Mammary epithelial cell (primary cell): ENCODE measurements at regions of chr6 and their contacts with region 1.

Region 1: DNA sequence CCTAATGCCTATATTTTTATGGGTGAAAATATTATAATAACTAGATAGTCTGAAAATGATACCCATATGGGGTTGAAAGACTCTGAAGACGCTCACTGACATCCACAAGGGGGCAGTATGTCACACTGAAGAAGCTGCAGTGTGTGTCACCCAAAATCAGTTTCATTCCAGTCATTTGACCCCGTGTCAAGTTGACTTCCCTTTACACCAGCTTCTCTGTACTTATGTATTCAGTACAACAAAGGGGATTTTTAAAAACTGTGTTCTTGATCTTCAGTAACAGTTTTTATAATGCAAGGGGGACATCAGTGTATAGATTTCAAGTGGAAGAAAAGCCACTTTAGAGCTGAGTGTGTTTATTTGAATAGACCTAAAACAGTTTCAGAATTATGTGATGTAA is 19.3 kb downstream of the FAXC start:
- DNase-seq: peak; percentile 63
- H3K4me3 ChIP-seq: no peak overlapping the region
- H3K27ac ChIP-seq: no peak overlapping the region
- H3K4me1 ChIP-seq: no peaks in the 10 kb centered on the region
- H3K27me3 ChIP-seq: no peaks in the 10 kb centered on the region
- CTCF ChIP-seq: peak; percentile 80 to 83

Region 2: DNA sequence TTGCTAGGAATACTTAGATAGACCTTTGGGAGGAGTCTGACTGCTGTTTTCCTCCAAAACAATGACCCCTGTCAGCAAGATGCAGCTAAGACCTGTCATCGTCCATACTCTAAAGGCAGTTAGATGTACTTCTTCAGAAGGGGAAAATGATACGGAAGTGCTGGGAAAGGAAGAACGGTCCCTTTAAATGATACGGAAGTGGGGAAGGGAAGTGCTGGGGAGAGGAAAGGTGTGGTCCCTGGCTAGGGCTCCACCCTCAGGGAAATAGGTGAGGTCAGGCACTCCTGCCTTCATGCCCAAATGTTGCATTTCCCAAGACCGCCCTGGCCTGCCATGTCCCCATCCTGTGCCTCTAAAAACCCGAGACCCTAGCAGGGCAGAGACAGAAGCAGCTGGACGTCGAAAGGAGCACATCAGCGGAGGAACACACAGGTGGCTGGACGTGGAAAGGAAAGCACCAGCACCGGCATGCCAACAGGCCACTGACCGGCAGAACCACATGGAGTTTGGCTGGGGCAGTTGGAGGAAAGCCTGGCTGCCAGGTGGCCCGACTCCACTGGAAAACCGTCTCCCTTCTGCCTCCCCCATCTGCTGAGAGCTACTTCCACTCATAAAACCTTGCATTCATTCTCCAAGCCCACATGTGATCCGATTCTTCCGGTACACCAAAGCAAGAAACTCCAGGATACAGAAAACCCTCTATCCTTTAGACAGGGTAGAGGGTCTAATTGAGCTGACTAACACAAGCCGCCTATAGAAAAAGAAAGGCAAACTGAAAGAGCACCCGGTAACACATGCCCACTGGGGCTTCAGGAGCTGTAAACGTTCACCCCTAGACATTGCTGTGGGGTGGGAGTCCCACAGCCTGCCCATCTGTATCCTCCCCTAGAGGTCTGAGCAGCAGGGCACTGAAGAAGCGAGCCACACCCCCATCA is 75.3 kb before region 1 on chr6:
- CTCF ChIA-PET with region 1: no interaction called
- dilution Hi-C with region 1: no loop called
- in situ Hi-C with region 1: no loop called
- intact Hi-C with region 1: no loop called
- DNase-seq: no peak
- H3K4me3 ChIP-seq: no peak overlapping the region
- H3K27ac ChIP-seq: no peak overlapping the region
- H3K4me1 ChIP-seq: no peaks in the 10 kb centered on the region
- H3K27me3 ChIP-seq: peaks cover 2% of the 10 kb centered on the region
- CTCF ChIP-seq: no peak

Region 3: GRCh38 chr6:99282491-99283062 is 47.6 kb before region 1 on chr6:
- CTCF ChIA-PET with region 1: no interaction called
- dilution Hi-C with region 1: no loop called
- in situ Hi-C with region 1: no loop called
- intact Hi-C with region 1: no loop called
- DNase-seq: peak; percentile 1
- H3K4me3 ChIP-seq: no peak overlapping the region
- H3K27ac ChIP-seq: no peak overlapping the region
- H3K4me1 ChIP-seq: no peaks in the 10 kb centered on the region
- H3K27me3 ChIP-seq: no peaks in the 10 kb centered on the region
- CTCF ChIP-seq: peak; percentile 58 to 59

Region 4: DNA sequence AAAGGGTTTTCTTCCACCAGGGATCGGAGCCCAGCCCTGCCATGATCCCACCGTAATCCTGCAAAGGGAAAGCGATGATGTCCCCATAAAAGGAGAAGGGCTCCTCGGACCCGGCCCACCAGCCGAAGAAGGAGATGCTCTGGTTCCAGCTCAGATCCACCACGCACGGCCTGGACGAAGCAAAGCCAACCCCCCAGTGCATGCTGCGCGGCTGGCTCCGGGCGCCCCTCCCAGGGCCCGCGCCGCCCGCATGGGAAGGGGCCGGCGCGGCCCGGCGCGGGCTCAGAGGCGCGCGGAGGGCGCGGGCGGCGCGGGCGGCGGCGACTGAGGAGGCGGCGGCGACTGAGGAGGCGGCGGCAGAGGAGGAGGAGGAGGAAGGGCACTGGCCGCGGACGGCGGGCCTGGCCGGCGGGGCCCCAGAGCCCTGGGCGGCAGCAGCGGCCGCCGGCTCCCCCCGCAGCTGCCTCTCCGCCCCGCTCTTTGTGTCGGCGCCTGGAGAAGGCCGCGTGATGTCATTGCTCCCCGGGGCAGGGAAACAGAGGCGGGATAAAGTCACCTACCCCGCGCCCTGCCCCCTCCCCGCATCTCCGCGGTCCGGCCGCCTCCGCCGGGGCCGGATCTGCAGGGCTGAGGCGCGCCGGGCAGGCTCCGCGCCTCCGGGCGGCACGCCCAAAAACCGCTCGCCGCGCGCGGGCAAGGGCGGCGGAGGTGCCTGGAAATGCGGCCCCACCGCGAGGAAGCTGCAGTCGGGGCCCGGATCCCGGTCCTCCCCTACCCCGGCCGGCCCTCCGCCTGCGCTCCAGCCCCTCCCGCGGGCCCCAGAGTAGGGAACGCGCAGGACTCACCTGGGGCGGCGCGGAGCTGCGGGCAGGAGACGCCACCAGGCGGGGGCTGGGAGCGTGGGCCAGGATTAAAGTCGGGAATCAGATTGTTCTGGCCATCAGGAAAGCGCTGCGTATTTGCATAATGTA is 19.3 kb after region 1 on chr6 and contains the start of gene FAXC:
- CTCF ChIA-PET with region 1: interaction called, 3 read pairs
- dilution Hi-C with region 1: no loop called
- in situ Hi-C with region 1: no loop called
- intact Hi-C with region 1: loop called (anchors 1 kb)
- DNase-seq: peak; percentile 69
- H3K4me3 ChIP-seq: peak within 1 kb of the TSS; percentile 63 to 87 (median 64)
- H3K27ac ChIP-seq: peak within 1 kb of the TSS; percentile 36
- H3K4me1 ChIP-seq: peaks cover 19% of the 10 kb centered on the region
- H3K27me3 ChIP-seq: no peaks in the 10 kb centered on the region
- CTCF ChIP-seq: peak; percentile 18 to 48
- total RNA-seq, gene FAXC: 7.2 to 7.6 TPM

Region 5: DNA sequence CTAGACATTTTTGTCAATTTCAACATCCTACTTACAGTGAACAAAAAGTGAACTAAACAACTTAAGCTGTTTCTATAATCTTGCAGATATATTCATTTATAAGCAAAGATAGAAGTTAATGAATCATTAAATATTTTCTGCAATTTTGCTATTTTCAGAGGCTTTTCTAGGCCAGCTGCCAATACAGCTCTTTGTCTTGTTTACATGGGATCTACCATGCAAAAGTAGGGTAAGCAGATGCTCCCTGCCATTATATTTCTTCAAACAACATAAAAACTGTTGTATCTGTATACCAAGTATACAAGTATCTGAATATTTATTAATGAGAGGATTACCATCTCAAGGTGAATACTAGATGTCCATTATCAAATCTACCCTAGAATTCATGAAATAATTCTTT is 79.5 kb after region 1 on chr6:
- CTCF ChIA-PET with region 1: no interaction called
- dilution Hi-C with region 1: no loop called
- in situ Hi-C with region 1: no loop called
- intact Hi-C with region 1: loop called (anchors 5 kb)
- DNase-seq: no peak
- H3K4me3 ChIP-seq: no peak overlapping the region
- H3K27ac ChIP-seq: no peak overlapping the region
- H3K4me1 ChIP-seq: no peaks in the 10 kb centered on the region
- H3K27me3 ChIP-seq: no peaks in the 10 kb centered on the region
- CTCF ChIP-seq: no peak

Region 6: GRCh38 chr6:99485395-99485773 is 155.2 kb after region 1 on chr6:
- CTCF ChIA-PET with region 1: no interaction called
- dilution Hi-C with region 1: no loop called
- in situ Hi-C with region 1: no loop called
- intact Hi-C with region 1: no loop called
- DNase-seq: no peak
- H3K4me3 ChIP-seq: no peak overlapping the region
- H3K27ac ChIP-seq: no peak overlapping the region
- H3K4me1 ChIP-seq: no peaks in the 10 kb centered on the region
- H3K27me3 ChIP-seq: no peaks in the 10 kb centered on the region
- CTCF ChIP-seq: no peak

Region 7: DNA sequence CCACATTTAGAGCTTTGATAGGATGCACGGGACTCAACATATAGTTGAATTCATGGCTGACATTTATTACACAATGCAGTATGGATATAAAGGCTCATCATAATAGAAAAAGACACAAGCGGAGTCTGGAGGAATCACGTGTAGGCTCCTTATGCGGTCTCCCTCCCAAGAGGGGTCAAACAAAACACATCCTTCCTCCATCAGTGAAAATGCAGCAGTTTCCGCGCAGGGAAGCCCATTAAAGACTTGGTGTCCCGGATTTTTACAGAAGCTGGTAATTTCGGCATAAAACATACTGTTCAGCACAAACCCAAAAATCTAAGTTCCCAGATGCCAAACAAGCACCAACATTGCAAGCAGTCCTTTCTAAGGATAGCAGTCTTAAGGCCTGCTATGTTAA is 183.9 kb after region 1 on chr6:
- CTCF ChIA-PET with region 1: no interaction called
- dilution Hi-C with region 1: no loop called
- in situ Hi-C with region 1: no loop called
- intact Hi-C with region 1: loop called (anchors 10 kb)
- DNase-seq: no peak
- H3K4me3 ChIP-seq: peak overlapping the region; percentile 82 to 98 (median 91)
- H3K27ac ChIP-seq: peak overlapping the region; percentile 82
- H3K4me1 ChIP-seq: peaks cover 14% of the 10 kb centered on the region
- H3K27me3 ChIP-seq: no peaks in the 10 kb centered on the region
- CTCF ChIP-seq: no peak

Region 8: GRCh38 chr6:99746261-99746895 is 416.2 kb after region 1 on chr6:
- CTCF ChIA-PET with region 1: no interaction called
- dilution Hi-C with region 1: no loop called
- in situ Hi-C with region 1: no loop called
- intact Hi-C with region 1: loop called (anchors 5 kb)
- DNase-seq: peak; percentile 61
- H3K4me3 ChIP-seq: no peak overlapping the region
- H3K27ac ChIP-seq: no peak overlapping the region
- H3K4me1 ChIP-seq: peaks cover 13% of the 10 kb centered on the region
- H3K27me3 ChIP-seq: peaks cover 2% of the 10 kb centered on the region
- CTCF ChIP-seq: peak; percentile 85 to 90